CD4-positive, alpha-beta memory T cell (primary cell): ENCODE measurements at regions of chr19 and their contacts with region 1.

Region 1: DNA sequence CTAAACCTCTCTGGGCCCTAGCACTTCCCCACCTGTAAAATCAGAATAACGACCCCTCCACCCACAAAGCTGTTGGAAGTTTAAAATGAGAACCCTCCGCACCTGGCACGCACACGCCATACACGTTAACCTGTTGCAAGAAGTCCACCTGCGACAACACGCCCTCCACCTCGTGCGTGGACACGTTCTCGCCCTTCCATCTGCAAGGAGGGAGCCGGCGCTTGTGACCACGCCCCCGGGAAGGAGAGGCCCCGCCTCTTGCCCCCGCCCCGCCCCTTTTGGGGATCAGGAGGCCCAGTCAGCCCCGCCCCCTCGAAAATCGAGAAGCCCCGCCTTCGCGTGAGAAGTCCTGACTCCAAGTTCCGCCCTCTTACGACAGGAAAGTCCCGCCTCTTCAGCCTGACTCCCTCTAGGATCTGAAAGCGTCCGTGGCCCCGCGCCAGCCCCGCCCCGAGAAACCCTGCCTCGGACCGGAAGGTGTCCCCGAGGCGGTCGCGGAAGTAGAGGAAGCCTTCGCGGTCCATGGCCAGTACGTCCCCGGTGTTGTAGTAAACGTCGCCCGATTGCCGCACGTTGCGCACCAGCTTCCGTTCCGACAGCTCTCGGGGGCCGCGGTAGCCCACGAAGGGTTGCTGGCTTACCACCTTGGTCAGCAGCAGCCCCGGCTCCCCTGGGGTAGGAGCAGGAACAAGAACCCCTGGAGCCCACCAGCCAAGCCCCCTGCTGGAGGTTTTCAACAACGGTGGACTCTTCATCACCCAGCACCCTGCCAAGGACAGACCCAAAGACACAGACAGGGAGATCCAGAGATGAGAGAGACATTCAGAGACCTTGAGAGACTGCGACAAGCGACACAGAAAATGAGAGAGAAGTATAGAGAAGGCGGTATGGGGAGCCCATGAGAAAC is 12.5 kb downstream of the SLC27A5 start:
- DNase-seq: peak; percentile 89 to 96 (median 90)
- H3K4me3 ChIP-seq: peak overlapping the region; percentile 34 to 52
- H3K4me3 Mint-ChIP-seq: peak overlapping the region; percentile 86 to 94 (median 91)
- H3K27ac ChIP-seq: peak overlapping the region; percentile 66
- H3K27ac Mint-ChIP-seq: peak overlapping the region; percentile 77 to 98 (median 96)
- H3K4me1 ChIP-seq: peaks cover 16% of the 10 kb centered on the region
- H3K4me1 Mint-ChIP-seq: peaks cover 14 to 25% (median 17%) of the 10 kb centered on the region in 4 donors
- H3K27me3 ChIP-seq: no peaks in the 10 kb centered on the region
- H3K27me3 Mint-ChIP-seq: no peaks in the 10 kb centered on the region

Region 2: DNA sequence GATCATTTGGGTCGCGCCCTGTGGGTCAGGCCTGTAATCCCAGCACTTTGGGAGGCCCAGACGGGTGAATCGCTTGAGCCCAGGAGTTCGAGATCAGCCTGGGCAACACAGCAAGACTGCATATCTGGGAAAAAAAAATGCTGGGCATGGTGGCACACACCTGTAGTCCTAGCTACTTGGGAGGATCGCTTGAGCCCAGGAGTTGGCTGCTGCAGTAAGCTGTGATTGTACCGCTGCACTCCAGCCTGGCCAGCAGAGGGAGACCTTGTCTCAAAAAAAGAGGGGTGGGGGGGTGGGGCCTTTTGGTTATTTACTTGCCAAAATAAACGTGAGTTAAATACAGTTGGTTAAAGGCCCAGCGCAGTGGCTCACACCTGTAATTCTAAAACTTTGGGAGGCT is 280.4 kb before region 1 on chr19:
- CTCF ChIA-PET with region 1: no interaction called
- POLR2A ChIA-PET with region 1: no interaction called
- intact Hi-C with region 1: no loop called
- DNase-seq: peak in 3 of 5 donors; percentile 36 to 43 (median 40)
- H3K4me3 ChIP-seq: no peak overlapping the region
- H3K4me3 Mint-ChIP-seq: no peak overlapping the region
- H3K27ac ChIP-seq: no peak overlapping the region
- H3K27ac Mint-ChIP-seq: no peak overlapping the region
- H3K4me1 ChIP-seq: no peaks in the 10 kb centered on the region
- H3K4me1 Mint-ChIP-seq: no peaks in the 10 kb centered on the region
- H3K27me3 ChIP-seq: no peaks in the 10 kb centered on the region
- H3K27me3 Mint-ChIP-seq: no peaks in the 10 kb centered on the region

Region 3: GRCh38 chr19:58386576-58387337 is 112.5 kb before region 1 on chr19 and contains the start of gene RPS5:
- CTCF ChIA-PET with region 1: no interaction called
- POLR2A ChIA-PET with region 1: no interaction called
- intact Hi-C with region 1: loop called (anchors 1 kb)
- DNase-seq: peak; percentile 94 to 99 (median 98)
- H3K4me3 ChIP-seq: peak within 1 kb of the TSS; percentile 56 to 65
- H3K4me3 Mint-ChIP-seq: peak within 1 kb of the TSS; percentile 93 to 99 (median 96)
- H3K27ac ChIP-seq: peak within 1 kb of the TSS; percentile 89
- H3K27ac Mint-ChIP-seq: peak within 1 kb of the TSS; percentile 96 to 99 (median 98)
- H3K4me1 ChIP-seq: peaks cover 41% of the 10 kb centered on the region
- H3K4me1 Mint-ChIP-seq: peaks cover 27 to 60% (median 39%) of the 10 kb centered on the region in 4 donors
- H3K27me3 ChIP-seq: no peaks in the 10 kb centered on the region
- H3K27me3 Mint-ChIP-seq: no peaks in the 10 kb centered on the region
- total RNA-seq, gene RPS5: 1,267 to 1,360 TPM

Region 4: GRCh38 chr19:58451358-58452101 is 47.7 kb before region 1 on chr19 and contains the start of gene ZNF324B:
- CTCF ChIA-PET with region 1: no interaction called
- POLR2A ChIA-PET with region 1: no interaction called
- intact Hi-C with region 1: loop called (anchors 1 kb)
- DNase-seq: peak; percentile 96 to 97 (median 96)
- H3K4me3 ChIP-seq: peak within 1 kb of the TSS; percentile 60 to 69
- H3K4me3 Mint-ChIP-seq: peak within 1 kb of the TSS; percentile 85 to 93 (median 88)
- H3K27ac ChIP-seq: peak within 1 kb of the TSS; percentile 67
- H3K27ac Mint-ChIP-seq: peak within 1 kb of the TSS; percentile 67 to 93 (median 84)
- H3K4me1 ChIP-seq: peaks cover 7% of the 10 kb centered on the region
- H3K4me1 Mint-ChIP-seq: peaks cover 13 to 31% (median 19%) of the 10 kb centered on the region in 4 donors
- H3K27me3 ChIP-seq: no peaks in the 10 kb centered on the region
- H3K27me3 Mint-ChIP-seq: peaks cover 6 to 11% of the 10 kb centered on the region in 2 donors
- total RNA-seq, gene ZNF324B: 13.1 to 13.7 TPM

Region 5: GRCh38 chr19:58466760-58467589 is 32.3 kb before region 1 on chr19 and contains the start of gene ZNF324:
- CTCF ChIA-PET with region 1: no interaction called
- POLR2A ChIA-PET with region 1: no interaction called
- intact Hi-C with region 1: loop called (anchors 1 kb)
- DNase-seq: peak; percentile 94 to 96 (median 95)
- H3K4me3 ChIP-seq: peak within 1 kb of the TSS; percentile 52 to 83
- H3K4me3 Mint-ChIP-seq: peak within 1 kb of the TSS; percentile 82 to 91 (median 87)
- H3K27ac ChIP-seq: peak within 1 kb of the TSS; percentile 92
- H3K27ac Mint-ChIP-seq: peak within 1 kb of the TSS; percentile 80 to 93 (median 91)
- H3K4me1 ChIP-seq: peaks cover 20% of the 10 kb centered on the region
- H3K4me1 Mint-ChIP-seq: peaks cover 14 to 32% (median 22%) of the 10 kb centered on the region in 4 donors
- H3K27me3 ChIP-seq: no peaks in the 10 kb centered on the region
- H3K27me3 Mint-ChIP-seq: peaks cover 0 to 1% of the 10 kb centered on the region in 2 donors
- total RNA-seq, gene ZNF324: 27.6 TPM

Region 6: GRCh38 chr19:58543826-58544590 is 44.7 kb after region 1 on chr19 and contains the start of gene TRIM28:
- CTCF ChIA-PET with region 1: interaction called, 3 read pairs
- POLR2A ChIA-PET with region 1: interaction called, 7 read pairs
- intact Hi-C with region 1: loop called (anchors 1 kb)
- DNase-seq: peak; percentile 100
- H3K4me3 ChIP-seq: peak within 1 kb of the TSS; percentile 86 to 87
- H3K4me3 Mint-ChIP-seq: peak within 1 kb of the TSS; percentile 91 to 97 (median 95)
- H3K27ac ChIP-seq: peak within 1 kb of the TSS; percentile 78
- H3K27ac Mint-ChIP-seq: peak within 1 kb of the TSS; percentile 95 to 100 (median 99)
- H3K4me1 ChIP-seq: peaks cover 30% of the 10 kb centered on the region
- H3K4me1 Mint-ChIP-seq: peaks cover 20 to 39% (median 27%) of the 10 kb centered on the region in 4 donors
- H3K27me3 ChIP-seq: no peaks in the 10 kb centered on the region
- H3K27me3 Mint-ChIP-seq: peaks cover 0 to 7% of the 10 kb centered on the region in 2 donors
- total RNA-seq, gene TRIM28: 342 to 348 TPM

Region 7: GRCh38 chr19:58558623-58559274 is 59.5 kb after region 1 on chr19:
- CTCF ChIA-PET with region 1: no interaction called
- POLR2A ChIA-PET with region 1: interaction called, 13 read pairs
- intact Hi-C with region 1: no loop called
- DNase-seq: peak; percentile 99 to 100 (median 100)
- H3K4me3 ChIP-seq: peak overlapping the region; percentile 47 to 100
- H3K4me3 Mint-ChIP-seq: peak overlapping the region; percentile 92 to 98 (median 97)
- H3K27ac ChIP-seq: peak overlapping the region; percentile 99
- H3K27ac Mint-ChIP-seq: peak overlapping the region; percentile 97 to 99 (median 99)
- H3K4me1 ChIP-seq: peaks cover 79% of the 10 kb centered on the region
- H3K4me1 Mint-ChIP-seq: peaks cover 28 to 96% (median 61%) of the 10 kb centered on the region in 4 donors
- H3K27me3 ChIP-seq: no peaks in the 10 kb centered on the region
- H3K27me3 Mint-ChIP-seq: no peaks in the 10 kb centered on the region

Region 8: GRCh38 chr19:58569661-58570285 is 70.5 kb after region 1 on chr19:
- CTCF ChIA-PET with region 1: no interaction called
- POLR2A ChIA-PET with region 1: no interaction called
- intact Hi-C with region 1: no loop called
- DNase-seq: no peak
- H3K4me3 ChIP-seq: no peak overlapping the region
- H3K4me3 Mint-ChIP-seq: peak overlapping the region in 1 of 8 donors; percentile 35
- H3K27ac ChIP-seq: no peak overlapping the region
- H3K27ac Mint-ChIP-seq: peak overlapping the region in 4 of 7 donors; percentile 8 to 79 (median 38)
- H3K4me1 ChIP-seq: peaks cover 23% of the 10 kb centered on the region
- H3K4me1 Mint-ChIP-seq: peaks cover 12 to 31% (median 22%) of the 10 kb centered on the region in 4 donors
- H3K27me3 ChIP-seq: no peaks in the 10 kb centered on the region
- H3K27me3 Mint-ChIP-seq: no peaks in the 10 kb centered on the region